ENCODE measurements at regions of chr6 and their contacts with region 1.

Region 1: GRCh38 chr6:7787137-7787608 is 61.3 kb downstream of the BMP6 start:
- DNase-seq: peak; percentile 32 to 85 (median 71)
- H3K4me3 ChIP-seq: no peak overlapping the region
- H3K27ac ChIP-seq: no peak overlapping the region
- H3K4me1 ChIP-seq: peaks cover 10 to 15% of the 10 kb centered on the region in 2 donors
- H3K27me3 ChIP-seq: peaks cover 8% of the 10 kb centered on the region
- CTCF ChIP-seq: no peak
- POLR2A ChIP-seq: no peak

Region 2: DNA sequence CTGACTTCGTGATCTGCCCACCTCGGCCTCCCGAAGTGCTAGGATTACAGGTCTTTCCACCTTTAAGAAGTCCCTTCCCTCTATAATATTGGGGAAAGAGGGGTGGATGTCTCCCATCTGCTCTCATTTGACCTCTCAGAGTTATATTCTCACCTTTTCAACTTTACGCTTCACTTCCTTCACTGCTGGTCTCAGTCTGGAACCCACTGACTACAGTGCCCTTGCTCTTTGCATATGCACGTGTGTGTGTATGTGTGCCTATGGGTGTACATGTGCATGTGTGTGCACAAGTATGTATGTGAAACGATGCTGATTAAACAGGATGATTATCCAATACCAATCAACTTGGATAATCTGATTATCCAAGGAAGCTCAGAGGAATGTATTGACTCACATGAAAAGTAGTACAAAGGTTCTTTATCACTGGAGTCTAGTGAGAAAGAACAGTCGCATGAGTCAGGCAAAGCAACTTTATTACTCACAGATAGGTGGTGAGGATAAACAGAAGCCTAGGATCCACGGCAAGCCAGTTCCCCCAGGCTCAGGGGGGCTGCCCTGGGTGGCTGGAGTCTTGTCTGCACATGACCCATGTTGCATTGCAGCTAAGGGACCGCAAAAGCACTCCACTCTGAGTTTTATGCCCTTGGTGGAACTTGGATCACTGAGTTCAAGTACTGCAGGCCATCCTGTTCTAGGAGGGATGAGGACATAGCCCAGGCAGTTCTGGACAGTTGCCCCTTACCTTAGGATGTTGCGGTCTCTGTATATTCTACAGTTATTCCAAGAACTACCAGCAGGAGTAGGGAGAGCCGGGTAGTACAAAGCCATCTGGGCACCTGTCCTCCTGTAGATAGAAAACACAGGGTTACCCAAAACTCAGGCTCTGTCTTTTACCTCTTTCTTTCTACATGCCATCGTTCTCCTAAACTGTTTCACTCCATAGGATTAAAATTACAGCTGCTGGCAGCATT is 146.3 kb before region 1 on chr6:
- intact Hi-C with region 1: loop called in 1 of 2 experiments (anchors 5 kb)
- DNase-seq: peak in 1 of 7 donors; percentile 20
- H3K4me3 ChIP-seq: no peak overlapping the region
- H3K27ac ChIP-seq: no peak overlapping the region
- H3K4me1 ChIP-seq: no peaks in the 10 kb centered on the region
- H3K27me3 ChIP-seq: no peaks in the 10 kb centered on the region
- CTCF ChIP-seq: no peak
- POLR2A ChIP-seq: no peak

Region 3: DNA sequence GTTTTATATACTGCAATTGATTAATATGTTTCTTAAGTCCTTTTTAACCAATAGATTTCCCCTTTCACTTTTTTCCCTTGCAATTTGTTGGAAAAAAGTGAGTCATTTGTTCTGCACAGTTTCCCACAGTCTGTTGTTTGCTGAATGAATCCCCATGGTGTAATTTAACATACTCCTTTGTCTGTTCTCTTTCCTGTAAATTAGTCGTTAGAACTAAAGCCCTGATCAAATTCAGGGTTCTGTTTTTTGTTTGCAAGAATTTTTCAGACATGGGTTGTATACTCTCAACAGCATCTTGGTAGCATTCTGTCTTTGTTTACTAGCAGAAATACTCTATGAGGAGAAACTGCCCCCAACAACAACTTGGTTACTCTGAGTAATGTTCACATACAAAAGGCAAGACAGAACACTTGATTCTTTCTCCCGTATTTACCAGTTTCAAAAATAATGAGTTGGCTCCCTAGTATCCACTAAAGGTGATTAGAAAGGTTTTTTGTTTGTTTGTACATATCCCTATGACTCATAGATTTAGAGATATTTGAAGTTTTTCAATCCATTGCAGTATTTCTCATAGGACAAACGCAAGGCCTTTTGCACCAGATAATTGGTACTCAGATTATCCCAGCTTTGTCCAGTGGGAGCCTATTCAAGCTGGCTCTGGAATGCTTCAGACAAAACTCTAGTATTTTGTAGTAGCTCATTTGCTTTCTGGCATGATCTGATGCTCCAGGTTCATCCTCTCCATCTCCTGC is 260.5 kb after region 1 on chr6:
- intact Hi-C with region 1: no loop called
- DNase-seq: no peak
- H3K4me3 ChIP-seq: no peak overlapping the region
- H3K27ac ChIP-seq: no peak overlapping the region
- H3K4me1 ChIP-seq: peaks cover 0 to 8% of the 10 kb centered on the region in 2 donors
- H3K27me3 ChIP-seq: no peaks in the 10 kb centered on the region
- CTCF ChIP-seq: no peak
- POLR2A ChIP-seq: no peak